ENCODE measurements at regions of chrX and their contacts with region 1.

Region 1: DNA sequence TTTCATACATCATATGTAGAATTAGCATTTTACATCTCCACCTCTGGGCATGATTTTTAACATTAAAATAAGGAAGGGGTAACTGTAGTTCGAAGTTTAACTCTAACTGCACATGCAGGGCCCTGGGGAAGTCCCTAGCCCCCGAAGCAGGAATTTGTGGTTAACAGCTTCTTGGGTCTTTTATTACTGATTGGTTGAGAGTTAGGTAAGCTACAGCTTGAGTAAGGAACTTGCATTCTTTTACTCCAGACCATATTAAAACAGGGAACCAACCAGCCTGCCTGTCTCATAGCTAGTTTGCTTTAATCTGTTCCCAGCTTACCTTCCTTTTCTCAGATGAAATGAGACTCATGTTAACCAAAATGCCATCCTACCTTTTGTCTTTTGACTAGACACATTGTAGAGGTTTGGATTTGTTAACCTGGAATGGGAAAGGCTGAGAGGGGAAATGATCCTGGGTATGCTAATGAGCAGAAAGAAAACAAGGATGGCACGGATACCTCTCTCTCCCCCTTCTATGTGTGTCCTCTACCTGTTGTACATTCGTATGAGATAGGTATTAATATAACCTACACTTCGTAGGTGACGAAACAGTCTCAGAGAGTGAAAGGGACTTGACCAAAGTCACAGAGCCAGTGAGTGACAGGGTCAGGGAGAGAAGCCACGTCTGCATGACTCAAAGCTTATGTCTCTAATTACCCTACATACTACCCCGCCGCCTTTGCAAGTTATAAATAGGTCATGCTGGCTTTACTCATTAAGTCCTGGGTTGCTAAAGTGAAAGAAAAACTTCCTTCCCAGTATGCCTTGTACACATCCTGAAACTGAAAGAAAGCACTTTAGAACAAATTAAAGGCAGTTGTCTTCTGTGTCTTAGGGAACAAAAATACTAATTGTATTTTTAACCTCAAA is 119.5 kb upstream of the AFF2 start:
- DNase-seq: peak; percentile 55
- ATAC-seq: peak; percentile 98
- H3K4me3 ChIP-seq: peak overlapping the region; percentile 56
- H3K27ac ChIP-seq: peak overlapping the region; percentile 47
- H3K4me1 ChIP-seq: peaks cover 6% of the 10 kb centered on the region; the same call in 1 of the 2 replicates
- H3K27me3 ChIP-seq: no peaks in the 10 kb centered on the region
- CTCF ChIP-seq: no peak
- EP300 ChIP-seq: 0 out of 4 replicates have a peak, but pooled peaks of 1 of the 2 experiments have one; percentile 9
- POLR2A ChIP-seq: no peak
- RAD21 ChIP-seq: no peak

Region 2: DNA sequence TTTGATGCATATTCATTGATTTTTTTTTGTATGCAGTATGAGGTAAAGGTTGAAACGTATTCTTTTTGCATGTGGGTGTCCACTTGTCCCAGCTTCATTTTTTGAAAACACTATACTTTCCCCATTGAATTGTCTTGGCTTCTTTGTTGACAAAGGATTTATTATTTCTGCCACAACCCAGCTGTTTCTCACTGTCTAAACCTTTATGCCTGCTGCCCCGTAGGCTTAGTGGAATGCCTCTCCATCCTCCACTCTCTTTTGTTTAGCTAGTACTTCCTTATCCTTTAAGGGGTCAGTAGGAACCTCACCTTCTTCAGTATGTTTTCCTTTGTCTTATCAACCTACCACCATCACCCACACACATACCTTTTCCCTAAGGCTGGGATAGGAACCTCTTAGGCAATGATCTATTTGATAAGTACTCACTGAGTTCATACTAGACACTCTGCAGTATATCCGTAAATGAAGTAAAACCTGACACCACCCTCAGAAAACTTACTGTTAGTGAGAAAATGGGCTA is 460.7 kb before region 1 on chrX:
- CTCF ChIA-PET with region 1: no interaction called
- POLR2A ChIA-PET with region 1: no interaction called
- RAD21 ChIA-PET with region 1: no interaction called
- SMC1A ChIA-PET with region 1: no interaction called
- in situ Hi-C with region 1: loop called (anchors 10 kb)
- intact Hi-C with region 1: no loop called
- DNase-seq: no peak
- ATAC-seq: no peak
- H3K4me3 ChIP-seq: no peak overlapping the region
- H3K27ac ChIP-seq: no peak overlapping the region
- H3K4me1 ChIP-seq: no peaks in the 10 kb centered on the region
- H3K27me3 ChIP-seq: no peaks in the 10 kb centered on the region
- CTCF ChIP-seq: no peak
- EP300 ChIP-seq: no peak
- POLR2A ChIP-seq: no peak
- RAD21 ChIP-seq: no peak

Region 3: DNA sequence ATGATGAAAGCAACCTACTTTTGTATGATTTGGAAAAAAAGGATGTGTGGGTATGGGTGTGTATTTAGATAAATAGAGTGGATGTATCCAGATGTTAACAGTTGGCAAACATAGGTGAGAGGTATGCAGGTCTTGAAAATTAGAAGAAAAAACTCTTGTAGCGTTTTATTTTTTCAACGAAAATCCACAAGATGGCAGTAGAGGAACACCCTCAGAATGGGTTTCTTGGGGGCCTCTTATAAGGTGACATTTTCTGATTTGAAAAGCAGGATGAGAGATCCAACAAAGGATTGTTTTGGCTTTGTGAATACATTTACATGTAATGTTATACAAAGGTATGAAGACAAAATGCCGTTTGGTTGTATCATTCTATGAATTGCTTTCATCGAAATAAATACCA is 331.5 kb before region 1 on chrX:
- CTCF ChIA-PET with region 1: interaction called, 5 read pairs
- POLR2A ChIA-PET with region 1: no interaction called
- RAD21 ChIA-PET with region 1: no interaction called
- SMC1A ChIA-PET with region 1: interaction called, 3 read pairs
- in situ Hi-C with region 1: no loop called
- intact Hi-C with region 1: loop called (anchors 10 kb)
- DNase-seq: no peak
- ATAC-seq: peak; percentile 69
- H3K4me3 ChIP-seq: no peak overlapping the region
- H3K27ac ChIP-seq: no peak overlapping the region
- H3K4me1 ChIP-seq: no peaks in the 10 kb centered on the region
- H3K27me3 ChIP-seq: no peaks in the 10 kb centered on the region
- CTCF ChIP-seq: peak; percentile 46 to 62 (median 49); a peak in 5 of 6 replicates
- EP300 ChIP-seq: no peak
- POLR2A ChIP-seq: no peak
- RAD21 ChIP-seq: peak; percentile 90

Region 4: GRCh38 chrX:148459343-148459742 is 78.4 kb after region 1 on chrX:
- CTCF ChIA-PET with region 1: no interaction called
- POLR2A ChIA-PET with region 1: no interaction called
- RAD21 ChIA-PET with region 1: interaction called, 3 read pairs
- SMC1A ChIA-PET with region 1: interaction called, 3 read pairs
- in situ Hi-C with region 1: no loop called
- intact Hi-C with region 1: loop called (anchors 2 kb)
- DNase-seq: peak; percentile 45
- ATAC-seq: peak; percentile 91
- H3K4me3 ChIP-seq: no peak overlapping the region
- H3K27ac ChIP-seq: no peak overlapping the region
- H3K4me1 ChIP-seq: peaks cover 13% of the 10 kb centered on the region
- H3K27me3 ChIP-seq: no peaks in the 10 kb centered on the region
- CTCF ChIP-seq: no peak
- EP300 ChIP-seq: no peak; a peak in 1 of 4 replicates
- POLR2A ChIP-seq: no peak
- RAD21 ChIP-seq: no peak

Region 5: DNA sequence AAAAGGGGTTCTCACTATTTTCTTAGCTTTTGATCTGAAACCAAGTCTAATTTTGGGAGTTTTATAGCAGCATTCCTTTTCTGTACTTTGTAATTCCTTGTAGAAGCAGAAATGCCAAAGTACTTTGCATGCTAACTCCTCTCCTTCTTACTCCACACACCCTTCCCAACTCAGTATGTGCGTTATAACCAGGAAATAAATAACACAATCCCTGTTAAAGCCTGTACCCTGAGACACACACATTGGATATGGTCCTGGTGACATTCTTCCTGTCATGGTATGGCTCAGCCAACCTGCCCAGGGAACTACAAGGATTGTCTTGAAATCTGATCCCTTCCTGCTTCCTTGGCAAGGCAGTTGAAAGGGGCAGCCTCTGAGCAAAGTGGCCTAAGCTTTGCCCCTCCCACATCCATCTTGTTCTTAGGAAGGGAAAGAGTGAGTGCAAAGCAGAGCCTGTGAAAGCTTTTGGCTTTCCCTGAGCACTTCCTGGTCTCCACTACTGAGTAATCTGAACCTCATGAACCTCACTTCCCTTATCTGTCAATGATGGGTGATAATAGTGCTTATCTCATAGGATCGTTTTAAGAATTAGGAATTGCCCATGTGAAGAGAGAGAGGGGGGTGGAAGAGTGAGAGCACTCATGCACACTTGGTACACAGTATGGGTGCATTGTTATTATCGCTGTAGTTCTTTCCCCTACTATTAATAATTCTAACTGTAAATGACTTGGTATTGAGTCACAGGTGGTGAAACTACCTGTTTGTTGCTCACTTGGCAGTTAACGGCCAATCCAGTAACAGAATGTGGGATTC is 228.8 kb after region 1 on chrX:
- CTCF ChIA-PET with region 1: no interaction called
- POLR2A ChIA-PET with region 1: no interaction called
- RAD21 ChIA-PET with region 1: no interaction called
- SMC1A ChIA-PET with region 1: no interaction called
- in situ Hi-C with region 1: no loop called
- intact Hi-C with region 1: loop called (anchors 5 kb)
- DNase-seq: peak; percentile 40
- ATAC-seq: peak; percentile 90
- H3K4me3 ChIP-seq: peak overlapping the region; percentile 37
- H3K27ac ChIP-seq: peak overlapping the region; percentile 75
- H3K4me1 ChIP-seq: peaks cover 13% of the 10 kb centered on the region
- H3K27me3 ChIP-seq: no peaks in the 10 kb centered on the region
- CTCF ChIP-seq: no peak
- EP300 ChIP-seq: peak in 1 of 2 experiments; percentile 2; a peak in 1 of 4 replicates
- POLR2A ChIP-seq: no peak
- RAD21 ChIP-seq: no peak

Region 6: DNA sequence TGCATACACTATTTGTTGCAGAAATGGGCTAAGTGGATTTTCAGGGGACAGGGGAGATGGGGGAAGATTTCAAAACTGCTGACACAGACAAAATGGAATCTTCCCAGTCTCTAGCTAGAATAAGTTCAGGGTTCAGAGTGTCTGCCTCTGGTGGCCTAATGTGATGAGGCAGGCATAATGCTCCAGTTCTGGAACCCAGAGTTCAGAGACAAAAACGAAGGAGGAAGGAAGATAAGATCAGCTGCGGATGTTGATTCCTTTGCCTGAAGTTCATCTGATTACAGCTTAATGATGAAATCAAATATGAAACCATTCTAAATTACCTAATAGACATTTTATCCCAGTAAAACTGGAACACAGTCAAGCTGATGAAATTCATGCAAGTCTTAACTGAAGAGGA is 566.6 kb after region 1 on chrX:
- CTCF ChIA-PET with region 1: no interaction called
- POLR2A ChIA-PET with region 1: no interaction called
- RAD21 ChIA-PET with region 1: no interaction called
- SMC1A ChIA-PET with region 1: no interaction called
- in situ Hi-C with region 1: no loop called
- intact Hi-C with region 1: no loop called
- DNase-seq: no peak
- ATAC-seq: no peak
- H3K4me3 ChIP-seq: no peak overlapping the region
- H3K27ac ChIP-seq: no peak overlapping the region
- H3K4me1 ChIP-seq: no peaks in the 10 kb centered on the region
- H3K27me3 ChIP-seq: no peaks in the 10 kb centered on the region
- CTCF ChIP-seq: no peak
- EP300 ChIP-seq: no peak
- POLR2A ChIP-seq: no peak
- RAD21 ChIP-seq: no peak

Measured in GM12878 (cell line).